H1 (cell line): ENCODE measurements at regions of chr13 and their contacts with region 1.

Region 1: GRCh38 chr13:51935326-51936201 is 73.8 kb downstream of the CCDC70 start:
- DNase-seq: peak in 1 of 2 experiments; percentile 74
- H3K4me3 ChIP-seq: no peak overlapping the region
- H3K27ac ChIP-seq: no peak overlapping the region
- H3K4me1 ChIP-seq: no peaks in the 10 kb centered on the region
- H3K27me3 ChIP-seq: no peaks in the 10 kb centered on the region
- CTCF ChIP-seq: peak; percentile 69 to 74 (median 73)
- EP300 ChIP-seq: no peak
- POLR2A ChIP-seq: no peak
- RAD21 ChIP-seq: peak; percentile 66 to 76

Region 2: DNA sequence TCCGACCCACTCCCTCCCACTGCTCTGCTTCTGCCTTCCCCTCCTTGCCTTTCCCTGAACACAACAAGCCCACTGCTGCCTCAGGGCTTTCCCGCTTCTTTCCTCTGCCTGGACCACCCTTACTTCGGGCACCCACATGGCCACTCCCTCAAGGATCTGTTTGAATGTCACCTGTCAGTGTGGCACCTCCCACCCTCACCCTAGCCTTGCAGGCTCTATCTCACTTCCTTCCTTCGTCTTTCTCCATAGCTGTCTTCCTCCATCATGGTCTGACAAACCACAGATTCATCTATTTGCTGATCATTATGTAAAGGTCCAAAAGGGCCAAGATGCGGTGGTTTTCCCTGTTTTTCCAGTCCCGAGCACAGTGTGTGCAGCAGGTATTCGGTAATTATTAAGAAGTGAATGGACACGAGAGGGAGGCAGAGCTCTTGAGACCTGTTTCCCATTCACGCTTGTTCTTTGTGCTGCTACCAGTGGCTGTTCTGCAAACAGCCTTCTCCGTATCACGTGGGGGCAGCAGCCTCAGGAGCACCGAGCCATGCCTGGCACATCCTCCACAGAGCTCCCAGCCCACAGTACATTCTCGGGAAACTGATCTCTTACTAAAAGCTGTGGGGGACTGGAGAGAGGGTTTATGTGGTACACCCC is 23.6 kb before region 1 on chr13:
- CTCF ChIA-PET with region 1: interaction called, 65 read pairs
- POLR2A ChIA-PET with region 1: no interaction called
- DNase-seq: no peak
- H3K4me3 ChIP-seq: no peak overlapping the region
- H3K27ac ChIP-seq: no peak overlapping the region
- H3K4me1 ChIP-seq: no peaks in the 10 kb centered on the region; a peak in 2 of 7 replicates
- H3K27me3 ChIP-seq: no peaks in the 10 kb centered on the region
- CTCF ChIP-seq: no peak
- EP300 ChIP-seq: no peak
- POLR2A ChIP-seq: no peak
- RAD21 ChIP-seq: no peak

Region 3: DNA sequence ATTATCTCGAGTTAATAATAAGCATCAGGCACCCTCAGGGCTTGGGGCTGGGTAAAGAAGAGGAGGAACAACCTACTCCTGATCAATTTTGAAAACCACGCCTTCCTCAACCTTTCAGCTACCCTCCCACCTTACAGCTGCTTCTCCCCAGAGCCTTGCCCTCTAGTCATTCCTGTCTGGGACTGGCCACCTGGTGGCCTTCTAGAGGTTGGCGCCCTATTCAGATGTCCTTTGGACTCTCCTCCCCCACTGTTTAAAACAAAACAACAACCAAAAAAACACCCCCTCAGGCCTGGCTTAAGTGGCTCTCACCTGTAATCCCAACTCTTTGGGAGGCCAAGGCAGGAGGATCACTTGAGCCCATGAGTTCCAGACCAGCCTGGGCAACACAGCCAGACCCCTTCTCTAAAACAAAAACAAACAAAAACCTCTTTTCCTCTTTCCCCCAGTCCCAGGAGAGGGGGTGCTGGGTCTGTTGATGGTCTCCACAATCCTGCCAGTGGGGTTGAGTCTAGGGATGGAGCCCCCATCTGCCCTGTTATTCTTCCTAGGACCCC is 11.5 kb before region 1 on chr13:
- CTCF ChIA-PET with region 1: interaction called, 18 read pairs
- POLR2A ChIA-PET with region 1: no interaction called
- DNase-seq: no peak
- H3K4me3 ChIP-seq: no peak overlapping the region
- H3K27ac ChIP-seq: no peak overlapping the region
- H3K4me1 ChIP-seq: no peaks in the 10 kb centered on the region
- H3K27me3 ChIP-seq: no peaks in the 10 kb centered on the region
- CTCF ChIP-seq: peak; percentile 47 to 57 (median 51)
- EP300 ChIP-seq: no peak
- POLR2A ChIP-seq: no peak
- RAD21 ChIP-seq: peak; percentile 37 to 46

Region 4: DNA sequence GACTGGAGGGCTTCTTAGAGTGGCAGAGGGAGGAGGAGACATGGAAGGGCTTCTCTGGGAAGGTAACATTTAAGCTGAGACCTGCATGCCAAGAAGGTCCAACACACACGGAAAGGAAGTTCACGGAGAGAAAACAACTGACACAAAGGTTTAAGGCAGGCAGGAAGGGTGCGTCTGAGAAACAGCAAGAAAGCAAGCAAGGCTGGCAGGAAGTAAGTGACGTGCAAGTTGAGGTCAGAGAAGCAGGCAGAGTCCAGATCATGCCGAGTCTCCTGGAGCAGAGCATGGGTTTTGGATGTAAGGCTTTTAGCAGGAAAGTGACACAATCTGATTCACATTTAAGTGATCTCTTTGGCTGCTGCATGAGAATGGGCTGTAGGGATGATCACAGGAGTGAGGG is 15.2 kb after region 1 on chr13:
- CTCF ChIA-PET with region 1: interaction called, 15 read pairs
- POLR2A ChIA-PET with region 1: interaction called, 3 read pairs
- DNase-seq: no peak
- H3K4me3 ChIP-seq: no peak overlapping the region
- H3K27ac ChIP-seq: no peak overlapping the region
- H3K4me1 ChIP-seq: no peaks in the 10 kb centered on the region
- H3K27me3 ChIP-seq: 0 out of 7 replicates have a peak, but pooled peaks cover 0 to 2% (median 0%) of the 10 kb centered on the region in 4 experiments
- CTCF ChIP-seq: no peak
- EP300 ChIP-seq: no peak
- POLR2A ChIP-seq: no peak
- RAD21 ChIP-seq: no peak